Spleen (tissue), 13 donors: ENCODE measurements at regions of chr2 and their contacts with region 1.

Region 1: GRCh38 chr2:101751875-101752619 is 54.5 kb downstream of the MAP4K4 start:
- DNase-seq: no peak
- H3K4me3 ChIP-seq: no peak overlapping the region
- H3K27ac ChIP-seq: peak overlapping the region in 7 of 8 donors; percentile 38 to 74 (median 49)
- H3K4me1 ChIP-seq: peaks cover 27 to 81% (median 68%) of the 10 kb centered on the region in 6 donors
- H3K27me3 ChIP-seq: no peaks in the 10 kb centered on the region
- CTCF ChIP-seq: no peak
- POLR2A ChIP-seq: no peak

Region 2: GRCh38 chr2:101818531-101819451 is 66.7 kb after region 1 on chr2:
- intact Hi-C with region 1: loop called (anchors 10 kb)
- DNase-seq: no peak
- H3K4me3 ChIP-seq: no peak overlapping the region
- H3K27ac ChIP-seq: no peak overlapping the region
- H3K4me1 ChIP-seq: peaks cover 7 to 75% (median 45%) of the 10 kb centered on the region in 6 donors
- H3K27me3 ChIP-seq: no peaks in the 10 kb centered on the region
- CTCF ChIP-seq: no peak
- POLR2A ChIP-seq: no peak